ENCODE measurements at regions of chr22 and their contacts with region 1.

Region 1: GRCh38 chr22:20258584-20259326 is 9.4 kb downstream of the RTN4R start:
- DNase-seq: peak; percentile 49
- ATAC-seq: no peak; the same call in 1 of the 2 replicates
- H3K4me3 Mint-ChIP-seq: no peak overlapping the region
- H3K27ac Mint-ChIP-seq: no peak overlapping the region
- H3K4me1 Mint-ChIP-seq: no peaks in the 10 kb centered on the region
- H3K27me3 Mint-ChIP-seq: no peaks in the 10 kb centered on the region
- CTCF ChIP-seq: peak; percentile 32; the same call in 1 of the 2 replicates

Region 2: DNA sequence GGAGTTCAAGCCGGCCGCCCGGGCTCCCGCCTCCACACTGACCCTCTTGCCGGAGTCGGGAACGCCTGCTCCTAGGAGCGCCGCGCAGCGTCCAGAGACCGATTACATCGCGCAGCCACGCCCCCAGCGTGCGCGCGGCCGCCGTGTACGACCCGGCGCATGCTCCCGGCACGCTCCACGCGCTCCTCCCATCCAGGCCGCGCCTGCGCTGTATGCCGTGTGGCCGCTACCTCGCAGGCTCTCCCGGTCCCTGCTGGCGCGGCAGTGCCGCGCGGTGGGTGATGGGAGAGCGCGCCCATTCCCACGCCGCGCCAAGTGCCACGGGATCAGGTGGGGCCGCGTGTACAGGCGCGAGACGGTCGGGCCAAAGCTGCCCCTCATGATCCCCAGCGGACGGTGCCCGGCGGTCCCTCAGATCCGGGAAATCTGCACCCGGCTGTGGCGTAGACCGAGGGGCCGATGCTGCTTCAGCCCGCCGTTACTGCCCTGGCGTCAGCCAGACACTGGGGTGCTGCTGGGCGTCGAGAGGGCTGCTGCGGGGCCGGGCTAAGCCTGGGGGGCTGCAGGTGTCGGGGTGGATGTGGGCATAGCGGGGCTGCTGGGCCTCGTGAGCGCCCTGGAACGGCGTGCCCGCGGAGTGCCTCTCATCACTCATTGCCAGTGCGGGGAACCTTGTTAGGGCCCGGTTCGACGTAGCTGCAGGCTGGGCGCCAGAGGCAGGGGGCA is 403.8 kb before region 1 on chr22 and contains the starts of genes GNB1L and RTL10:
- CTCF ChIA-PET with region 1: no interaction called
- POLR2A ChIA-PET with region 1: no interaction called
- DNase-seq: peak; percentile 95
- ATAC-seq: peak; percentile 90
- H3K4me3 Mint-ChIP-seq: peak within 1 kb of the TSS; percentile 88
- H3K27ac Mint-ChIP-seq: peak within 1 kb of the TSS; percentile 21
- H3K4me1 Mint-ChIP-seq: peaks cover 37% of the 10 kb centered on the region
- H3K27me3 Mint-ChIP-seq: no peaks in the 10 kb centered on the region
- CTCF ChIP-seq: no peak
- total RNA-seq, gene GNB1L: 18.0 to 21.7 TPM (median 19.4 TPM) in 3 replicates
- total RNA-seq, gene RTL10: 19.2 to 21.5 TPM (median 20.6 TPM) in 3 replicates

Region 3: DNA sequence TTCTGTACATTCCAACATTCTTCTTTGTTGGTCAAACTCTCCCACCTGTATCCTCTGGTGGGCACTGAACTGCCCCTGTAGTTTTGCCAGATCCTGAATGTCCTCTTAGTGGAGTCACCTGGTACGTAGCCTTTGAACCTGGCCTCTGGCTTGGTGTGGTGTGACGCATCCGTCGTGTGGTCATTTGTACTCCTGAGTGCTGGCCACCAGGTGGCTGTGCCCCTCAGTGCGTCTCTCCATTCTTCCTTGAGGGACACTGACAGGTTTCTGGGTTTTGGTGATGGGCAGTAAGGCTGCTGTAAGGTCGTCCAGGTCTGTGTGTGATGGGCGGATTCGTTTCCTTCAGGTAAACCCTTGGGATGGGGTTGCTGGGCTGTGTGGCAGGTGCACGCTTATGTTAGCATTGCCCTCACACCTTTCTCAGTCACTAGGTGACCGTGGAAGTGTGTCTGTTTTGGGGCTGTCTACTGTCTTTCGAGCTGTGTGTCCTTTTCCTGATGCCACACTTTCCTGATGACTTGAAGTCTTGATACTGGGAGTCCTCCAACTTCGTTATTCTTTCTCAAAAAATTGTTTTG is 156.5 kb before region 1 on chr22:
- CTCF ChIA-PET with region 1: no interaction called
- POLR2A ChIA-PET with region 1: no interaction called
- DNase-seq: no peak
- ATAC-seq: peak; percentile 47; the same call in 1 of the 2 replicates
- H3K4me3 Mint-ChIP-seq: no peak overlapping the region
- H3K27ac Mint-ChIP-seq: peak overlapping the region; percentile 46; the same call in 1 of the 2 replicates
- H3K4me1 Mint-ChIP-seq: peaks cover 20% of the 10 kb centered on the region
- H3K27me3 Mint-ChIP-seq: no peaks in the 10 kb centered on the region
- CTCF ChIP-seq: no peak

Region 4: DNA sequence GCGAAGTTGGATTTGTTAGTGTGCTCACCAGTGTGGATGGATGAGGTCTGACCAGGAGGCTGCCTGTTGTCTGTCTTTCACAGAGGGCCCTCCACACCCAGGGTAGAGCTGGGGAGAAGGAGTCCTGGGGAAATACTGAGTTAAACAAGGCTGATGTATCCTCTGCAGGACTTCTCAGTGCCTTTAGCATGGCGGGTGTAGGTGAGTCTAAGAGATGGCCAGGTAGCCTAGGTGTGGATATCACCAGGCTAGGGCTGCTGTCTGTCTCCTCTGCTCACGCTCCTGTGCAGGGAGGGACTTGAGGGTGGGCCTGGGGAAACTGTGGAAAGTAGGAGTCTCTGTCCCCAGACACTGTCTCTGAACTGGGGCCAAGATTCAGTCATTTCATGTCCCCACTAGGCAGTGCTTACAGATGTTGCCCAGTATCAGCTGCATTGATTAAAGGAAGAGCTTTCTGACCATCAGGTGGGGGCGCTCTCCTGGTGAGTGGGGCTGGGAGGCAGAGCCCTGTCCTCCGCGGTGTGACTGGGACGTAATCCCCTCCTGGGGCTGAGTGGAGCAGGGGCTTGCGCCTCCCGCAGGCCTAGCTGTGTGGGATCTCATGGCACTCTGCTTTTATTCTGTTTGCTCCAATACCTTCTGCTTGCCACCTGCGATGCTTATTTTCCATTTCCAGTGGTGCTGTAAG is 72.4 kb before region 1 on chr22:
- CTCF ChIA-PET with region 1: interaction called, 11 read pairs
- POLR2A ChIA-PET with region 1: no interaction called
- DNase-seq: peak; percentile 81
- ATAC-seq: peak; percentile 95
- H3K4me3 Mint-ChIP-seq: no peak overlapping the region
- H3K27ac Mint-ChIP-seq: no peak overlapping the region
- H3K4me1 Mint-ChIP-seq: no peaks in the 10 kb centered on the region
- H3K27me3 Mint-ChIP-seq: no peaks in the 10 kb centered on the region
- CTCF ChIP-seq: no peak

Region 5: DNA sequence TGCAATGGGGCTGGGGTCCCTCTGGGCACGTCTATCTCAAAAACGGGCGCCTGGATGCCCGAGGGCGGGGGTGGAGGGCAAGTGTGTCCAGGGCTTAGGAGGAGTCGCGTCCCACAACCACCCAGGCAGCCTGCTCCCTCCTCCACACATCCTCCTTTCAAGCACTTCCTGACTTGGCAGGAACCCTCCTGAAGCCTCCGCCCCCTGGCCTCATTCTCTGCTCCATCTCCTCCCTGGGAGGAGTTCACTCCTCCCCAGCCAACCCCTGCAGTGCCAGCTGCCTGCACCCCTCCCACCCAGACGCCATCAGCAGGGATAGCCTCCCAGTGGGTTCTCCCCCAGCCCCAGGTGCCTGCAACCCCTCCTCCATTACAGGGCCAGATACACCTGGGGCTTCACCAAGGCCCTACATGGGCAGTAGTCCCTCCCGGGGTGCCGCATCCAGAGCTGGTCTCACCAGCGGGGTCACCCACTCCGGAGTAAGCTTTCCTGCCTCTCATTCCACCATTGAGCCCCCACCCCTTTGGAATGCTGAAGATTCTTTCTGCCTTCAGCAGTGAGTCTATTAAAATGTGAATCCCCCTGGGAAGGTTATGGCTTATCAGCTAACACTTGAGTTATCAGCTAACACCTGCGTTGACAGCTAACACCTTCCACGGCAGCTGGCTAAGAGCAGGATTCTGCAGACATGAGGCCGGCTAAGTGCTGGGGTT is 15.1 kb before region 1 on chr22:
- CTCF ChIA-PET with region 1: interaction called, 34 read pairs
- POLR2A ChIA-PET with region 1: no interaction called
- DNase-seq: no peak
- ATAC-seq: peak; percentile 16
- H3K4me3 Mint-ChIP-seq: no peak overlapping the region
- H3K27ac Mint-ChIP-seq: peak overlapping the region; percentile 60
- H3K4me1 Mint-ChIP-seq: peaks cover 40% of the 10 kb centered on the region
- H3K27me3 Mint-ChIP-seq: no peaks in the 10 kb centered on the region
- CTCF ChIP-seq: no peak

Region 6: GRCh38 chr22:20283674-20284066 is 24.9 kb after region 1 on chr22:
- CTCF ChIA-PET with region 1: interaction called, 10 read pairs
- POLR2A ChIA-PET with region 1: no interaction called
- DNase-seq: no peak
- ATAC-seq: no peak
- H3K4me3 Mint-ChIP-seq: no peak overlapping the region
- H3K27ac Mint-ChIP-seq: no peak overlapping the region
- H3K4me1 Mint-ChIP-seq: no peaks in the 10 kb centered on the region
- H3K27me3 Mint-ChIP-seq: no peaks in the 10 kb centered on the region
- CTCF ChIP-seq: no peak

Region 7: DNA sequence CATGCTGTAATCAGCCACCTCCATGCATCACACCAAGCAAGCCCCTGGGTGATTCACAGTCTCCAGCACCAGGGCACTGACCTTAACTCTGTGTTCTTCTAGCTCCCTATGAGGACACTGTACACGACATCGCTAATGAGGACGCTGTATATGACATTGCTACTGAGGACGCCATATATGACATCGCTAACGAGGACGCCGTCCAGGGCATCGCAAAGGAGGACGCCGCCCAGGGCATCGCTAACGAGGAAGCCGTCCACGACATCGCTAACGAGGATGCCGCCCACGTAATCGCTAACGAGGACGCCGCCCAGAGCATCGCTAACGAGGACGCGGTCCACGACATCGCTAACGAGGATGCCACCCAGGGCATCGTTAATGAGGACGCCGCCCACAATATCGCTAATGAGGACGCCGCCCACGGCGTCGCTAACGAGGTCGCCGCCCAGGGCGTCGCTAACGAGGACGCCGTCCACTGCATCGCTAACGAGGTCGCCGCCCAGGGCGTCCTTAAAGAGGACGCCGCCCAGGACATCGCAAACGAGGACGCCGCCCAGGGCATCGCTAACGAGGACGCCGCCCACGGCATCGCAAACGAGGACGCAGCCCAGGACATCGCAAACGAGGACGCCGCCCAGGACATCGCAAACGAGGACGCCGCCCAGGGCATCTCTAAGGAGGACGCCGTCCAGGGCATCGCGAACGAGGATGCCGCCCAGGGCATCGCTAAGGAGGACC is 95.7 kb after region 1 on chr22:
- CTCF ChIA-PET with region 1: no interaction called
- POLR2A ChIA-PET with region 1: no interaction called
- DNase-seq: no peak
- ATAC-seq: no peak
- H3K4me3 Mint-ChIP-seq: no peak overlapping the region
- H3K27ac Mint-ChIP-seq: no peak overlapping the region; the same call in 1 of the 2 replicates
- H3K4me1 Mint-ChIP-seq: no peaks in the 10 kb centered on the region
- H3K27me3 Mint-ChIP-seq: no peaks in the 10 kb centered on the region
- CTCF ChIP-seq: no peak

Region 8: DNA sequence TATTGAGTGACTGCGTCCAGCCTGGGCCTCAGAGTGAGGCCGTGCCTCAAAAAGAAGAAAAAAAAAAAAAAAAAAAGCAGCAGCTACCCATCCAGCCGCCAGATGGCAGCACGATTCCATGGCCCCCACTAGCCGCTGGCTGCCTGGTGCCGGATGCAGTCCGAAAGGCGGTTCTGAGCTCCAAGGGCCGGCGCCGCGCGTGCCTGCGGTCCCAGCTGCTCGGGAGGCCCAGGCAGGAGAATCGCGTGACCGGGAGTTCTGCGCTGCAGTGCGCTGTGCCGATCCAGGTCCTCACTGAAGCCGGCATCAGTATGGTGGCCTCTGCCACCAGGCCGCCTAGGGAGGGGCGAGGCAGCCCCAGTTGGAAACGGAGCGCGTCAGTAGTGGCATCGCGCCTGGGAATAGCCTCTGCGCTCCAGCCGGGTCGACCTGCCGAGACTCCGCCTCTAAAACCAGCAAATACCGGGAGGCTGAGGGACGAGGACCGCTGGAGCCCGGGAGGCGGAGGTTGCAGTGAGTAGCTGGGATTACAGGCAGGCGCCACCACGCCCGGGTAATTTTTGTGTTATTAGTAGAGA is 159.5 kb after region 1 on chr22:
- CTCF ChIA-PET with region 1: no interaction called
- POLR2A ChIA-PET with region 1: no interaction called
- DNase-seq: peak; percentile 83
- ATAC-seq: peak; percentile 85
- H3K4me3 Mint-ChIP-seq: peak overlapping the region; percentile 59
- H3K27ac Mint-ChIP-seq: no peak overlapping the region
- H3K4me1 Mint-ChIP-seq: peaks cover under 1% of the 10 kb centered on the region; the same call in 1 of the 2 replicates
- H3K27me3 Mint-ChIP-seq: no peaks in the 10 kb centered on the region; the same call in 1 of the 2 replicates
- CTCF ChIP-seq: peak; percentile 80

Measured in WTC11 (cell line).